GM12878 (cell line): ENCODE measurements at regions of chr18 and their contacts with region 1.

Region 1: DNA sequence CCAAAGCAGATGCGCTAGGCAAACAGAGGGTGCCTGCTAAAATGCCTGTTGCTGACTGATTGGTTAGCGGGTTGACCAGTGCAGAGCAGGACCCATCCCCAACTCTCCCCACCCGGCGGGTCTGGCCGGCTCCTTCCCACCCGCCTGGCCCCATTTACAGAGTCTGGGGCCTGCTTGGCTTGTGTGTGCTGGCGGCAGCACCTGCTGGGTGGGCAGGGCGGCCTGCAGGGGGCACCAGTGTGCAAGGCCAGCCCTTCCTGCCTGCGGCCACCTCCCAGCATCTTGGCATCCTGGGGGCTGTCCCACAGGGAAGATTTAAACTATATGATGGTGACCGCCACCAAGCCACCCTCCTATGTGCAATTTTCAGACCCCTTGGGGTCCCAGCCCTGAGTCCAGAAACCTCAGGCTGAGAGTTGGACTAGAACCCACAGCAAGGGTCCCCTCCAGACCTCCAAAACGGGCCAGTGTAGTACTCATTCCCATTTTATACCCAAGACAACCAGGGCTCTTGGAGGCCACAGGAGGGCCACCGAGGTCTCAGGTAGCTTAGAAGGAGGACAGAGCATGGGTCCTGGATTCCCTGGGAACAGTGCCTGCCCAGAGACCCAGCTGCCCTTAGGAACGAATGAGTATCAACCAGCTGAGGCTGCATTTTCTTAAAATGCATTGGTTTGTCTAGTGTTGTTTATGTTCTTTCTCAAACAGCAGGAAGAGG is 173.6 kb downstream of the SMAD7 start:
- DNase-seq: no peak
- ATAC-seq: peak; percentile 86
- H3K4me3 ChIP-seq: no peak overlapping the region
- H3K27ac ChIP-seq: peak overlapping the region; percentile 60
- H3K4me1 ChIP-seq: peaks cover 40% of the 10 kb centered on the region
- H3K27me3 ChIP-seq: no peaks in the 10 kb centered on the region
- CTCF ChIP-seq: peak; percentile 93 to 95 (median 94)
- EP300 ChIP-seq: no peak
- POLR2A ChIP-seq: no peak
- RAD21 ChIP-seq: peak; percentile 83

Region 2: DNA sequence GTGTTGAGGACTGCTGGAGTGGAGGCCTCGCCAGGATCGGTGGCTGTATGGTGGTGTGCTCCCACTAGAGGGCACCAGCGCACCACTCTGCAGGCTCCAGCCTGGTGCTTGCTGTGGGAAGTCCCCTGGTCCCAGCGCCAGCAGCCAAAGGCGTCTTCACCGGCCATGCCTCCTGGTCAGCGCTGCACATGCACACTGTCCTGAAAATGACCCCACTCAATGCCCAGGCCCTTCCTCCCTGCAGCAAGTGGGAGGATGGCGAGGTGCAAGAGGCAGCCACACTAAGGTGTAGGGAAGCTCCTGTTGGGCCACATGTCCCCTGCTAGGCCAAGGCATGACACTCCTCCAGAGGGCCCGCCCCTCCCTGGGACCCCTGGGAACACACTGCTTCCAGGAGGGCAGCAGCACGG is 101.8 kb before region 1 on chr18:
- CTCF ChIA-PET with region 1: interaction called, 17 read pairs
- POLR2A ChIA-PET with region 1: no interaction called
- RAD21 ChIA-PET with region 1: interaction called, 7 read pairs
- SMC1A ChIA-PET with region 1: interaction called, 3 read pairs
- in situ Hi-C with region 1: no loop called
- intact Hi-C with region 1: loop called (anchors 5 kb)
- DNase-seq: peak; percentile 51
- ATAC-seq: peak; percentile 98
- H3K4me3 ChIP-seq: no peak overlapping the region
- H3K27ac ChIP-seq: no peak overlapping the region
- H3K4me1 ChIP-seq: peaks cover 8% of the 10 kb centered on the region
- H3K27me3 ChIP-seq: no peaks in the 10 kb centered on the region
- CTCF ChIP-seq: peak; percentile 91 to 99 (median 97); a peak in 5 of 6 replicates
- EP300 ChIP-seq: 0 out of 4 replicates have a peak, but pooled peaks of 1 of the 2 experiments have one; percentile 30
- POLR2A ChIP-seq: no peak
- RAD21 ChIP-seq: peak; percentile 86

Region 3: GRCh38 chr18:48800876-48801727 is 23.9 kb after region 1 on chr18:
- CTCF ChIA-PET with region 1: interaction called, 36 read pairs
- POLR2A ChIA-PET with region 1: interaction called, 21 read pairs
- RAD21 ChIA-PET with region 1: interaction called, 86 read pairs
- SMC1A ChIA-PET with region 1: interaction called, 51 read pairs
- in situ Hi-C with region 1: no loop called
- intact Hi-C with region 1: loop called (anchors 1 kb)
- DNase-seq: peak; percentile 89
- ATAC-seq: peak; percentile 87
- H3K4me3 ChIP-seq: peak overlapping the region; percentile 36; the same call in 1 of the 2 replicates
- H3K27ac ChIP-seq: peak overlapping the region; percentile 92
- H3K4me1 ChIP-seq: peaks cover 52% of the 10 kb centered on the region
- H3K27me3 ChIP-seq: no peaks in the 10 kb centered on the region
- CTCF ChIP-seq: no peak
- EP300 ChIP-seq: peak; percentile 87 to 93
- POLR2A ChIP-seq: peak; percentile 60; the same call in 1 of the 2 replicates
- RAD21 ChIP-seq: no peak

Region 4: GRCh38 chr18:48827291-48828193 is 50.4 kb after region 1 on chr18:
- CTCF ChIA-PET with region 1: interaction called, 43 read pairs
- POLR2A ChIA-PET with region 1: interaction called, 12 read pairs
- RAD21 ChIA-PET with region 1: interaction called, 72 read pairs
- SMC1A ChIA-PET with region 1: interaction called, 76 read pairs
- in situ Hi-C with region 1: no loop called
- intact Hi-C with region 1: loop called (anchors 2 kb)
- DNase-seq: no peak
- ATAC-seq: no peak
- H3K4me3 ChIP-seq: no peak overlapping the region
- H3K27ac ChIP-seq: no peak overlapping the region
- H3K4me1 ChIP-seq: peaks cover 16% of the 10 kb centered on the region
- H3K27me3 ChIP-seq: no peaks in the 10 kb centered on the region
- CTCF ChIP-seq: no peak
- EP300 ChIP-seq: no peak
- POLR2A ChIP-seq: no peak
- RAD21 ChIP-seq: no peak

Region 5: DNA sequence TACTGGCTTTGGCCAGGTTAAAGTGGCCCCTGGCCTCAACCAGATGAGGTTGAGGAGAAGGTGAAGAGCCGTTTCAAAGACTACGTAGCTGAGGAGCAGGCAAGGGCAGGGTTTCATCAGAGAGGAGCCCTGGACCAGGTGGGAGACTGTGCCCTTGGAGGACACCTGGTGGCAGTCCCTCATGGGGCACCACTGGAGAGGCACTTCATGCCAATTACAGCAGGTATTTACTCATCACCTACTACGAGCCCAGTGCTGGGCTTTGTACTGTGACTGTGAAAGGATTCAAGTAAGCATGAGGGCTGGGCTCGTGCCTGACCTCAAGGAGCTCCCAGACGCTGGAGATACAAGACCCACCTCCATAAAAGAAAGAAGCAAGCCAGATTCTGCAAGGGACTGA is 136.0 kb after region 1 on chr18:
- CTCF ChIA-PET with region 1: interaction called, 38 read pairs
- POLR2A ChIA-PET with region 1: interaction called, 3 read pairs
- RAD21 ChIA-PET with region 1: interaction called, 26 read pairs
- SMC1A ChIA-PET with region 1: interaction called, 31 read pairs
- in situ Hi-C with region 1: no loop called
- intact Hi-C with region 1: loop called (anchors 2 kb)
- DNase-seq: no peak
- ATAC-seq: peak; percentile 79
- H3K4me3 ChIP-seq: no peak overlapping the region
- H3K27ac ChIP-seq: no peak overlapping the region
- H3K4me1 ChIP-seq: peaks cover 10% of the 10 kb centered on the region
- H3K27me3 ChIP-seq: no peaks in the 10 kb centered on the region
- CTCF ChIP-seq: peak; percentile 38 to 51 (median 43); a peak in 5 of 6 replicates
- EP300 ChIP-seq: no peak
- POLR2A ChIP-seq: no peak
- RAD21 ChIP-seq: peak; percentile 34; the same call in 1 of the 2 replicates

Region 6: GRCh38 chr18:48946329-48946835 is 169.2 kb after region 1 on chr18:
- CTCF ChIA-PET with region 1: interaction called, 14 read pairs
- POLR2A ChIA-PET with region 1: interaction called, 5 read pairs
- RAD21 ChIA-PET with region 1: interaction called, 29 read pairs
- SMC1A ChIA-PET with region 1: interaction called, 23 read pairs
- in situ Hi-C with region 1: no loop called
- intact Hi-C with region 1: loop called (anchors 2 kb)
- DNase-seq: no peak
- ATAC-seq: no peak
- H3K4me3 ChIP-seq: peak overlapping the region; percentile 92
- H3K27ac ChIP-seq: peak overlapping the region; percentile 42; the same call in 1 of the 2 replicates
- H3K4me1 ChIP-seq: peaks cover 19% of the 10 kb centered on the region
- H3K27me3 ChIP-seq: no peaks in the 10 kb centered on the region
- CTCF ChIP-seq: no peak
- EP300 ChIP-seq: no peak
- POLR2A ChIP-seq: no peak
- RAD21 ChIP-seq: no peak

Region 7: GRCh38 chr18:49178736-49179135 is 401.6 kb after region 1 on chr18:
- CTCF ChIA-PET with region 1: interaction called, 76 read pairs
- POLR2A ChIA-PET with region 1: interaction called, 8 read pairs
- RAD21 ChIA-PET with region 1: interaction called, 41 read pairs
- SMC1A ChIA-PET with region 1: interaction called, 26 read pairs
- in situ Hi-C with region 1: no loop called
- intact Hi-C with region 1: loop called (anchors 2 kb)
- DNase-seq: no peak
- ATAC-seq: peak; percentile 71
- H3K4me3 ChIP-seq: no peak overlapping the region
- H3K27ac ChIP-seq: no peak overlapping the region
- H3K4me1 ChIP-seq: peaks cover 9% of the 10 kb centered on the region; the same call in 1 of the 2 replicates
- H3K27me3 ChIP-seq: no peaks in the 10 kb centered on the region
- CTCF ChIP-seq: peak; percentile 49 to 62 (median 56); a peak in 5 of 6 replicates
- EP300 ChIP-seq: no peak
- POLR2A ChIP-seq: no peak
- RAD21 ChIP-seq: peak; percentile 83